Body of pancreas (tissue), 4 donors: ENCODE measurements at regions of chr12 and their contacts with region 1.

Region 1: DNA sequence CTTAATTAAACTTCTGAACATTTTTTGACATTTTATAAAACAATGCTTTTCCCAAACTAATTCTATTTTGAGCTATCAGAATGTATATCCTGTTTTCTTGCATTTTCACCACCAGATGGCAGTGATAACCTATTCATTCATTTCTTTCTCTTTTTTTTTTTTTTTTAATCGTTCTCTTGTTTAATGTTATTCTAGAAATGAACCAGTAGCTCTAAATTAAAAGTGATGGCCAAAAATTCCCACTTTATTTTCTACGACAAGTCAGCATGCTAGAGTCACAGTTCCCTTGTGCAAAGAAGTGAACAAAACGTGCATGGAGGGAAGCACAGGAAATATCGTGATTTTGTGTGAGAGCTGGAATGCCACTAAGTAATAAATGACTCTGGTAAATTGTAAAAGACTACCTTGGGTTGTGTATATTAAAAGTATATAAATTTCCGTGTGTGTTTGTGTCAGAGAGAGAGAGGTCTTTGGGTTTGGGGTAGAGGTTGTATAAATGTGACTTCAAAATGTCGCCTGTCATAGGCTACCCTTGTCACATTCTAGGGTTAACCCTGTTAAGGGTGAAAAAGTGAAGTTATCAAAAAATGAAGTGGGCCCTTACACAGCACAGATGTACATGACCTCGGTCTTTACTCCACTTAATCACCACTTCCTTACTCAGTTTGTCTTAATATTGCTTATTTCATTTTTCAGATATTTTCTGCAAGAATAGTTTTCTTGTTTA is 40.4 kb upstream of the LDHB start:
- DNase-seq: peak in 1 of 4 donors; percentile 17
- ATAC-seq: peak; percentile 45
- H3K4me3 ChIP-seq: no peak overlapping the region
- H3K27ac ChIP-seq: no peak overlapping the region
- H3K4me1 ChIP-seq: no peaks in the 10 kb centered on the region
- H3K27me3 ChIP-seq: no peaks in the 10 kb centered on the region
- CTCF ChIP-seq: peak; percentile 18 to 96 (median 67)
- POLR2A ChIP-seq: no peak

Region 2: DNA sequence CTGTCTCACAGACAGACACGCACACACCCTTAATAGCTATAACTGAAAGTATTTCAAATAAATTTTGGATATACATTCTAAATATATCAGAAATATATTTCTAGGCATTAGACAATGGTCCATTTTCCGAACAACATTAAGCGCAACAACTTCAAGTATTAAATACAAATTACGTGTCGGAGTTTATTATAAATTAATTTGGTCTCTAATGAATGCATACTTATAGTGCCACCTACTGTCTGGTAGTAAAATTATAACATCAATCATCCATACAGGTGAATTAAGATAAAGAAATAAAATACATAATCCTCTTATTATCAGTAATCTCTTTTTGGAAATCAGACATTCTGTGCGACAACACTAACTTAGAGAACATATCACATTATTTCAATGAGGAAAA is 320.8 kb after region 1 on chr12:
- intact Hi-C with region 1: loop called (anchors 5 kb)
- DNase-seq: no peak
- ATAC-seq: peak; percentile 47
- H3K4me3 ChIP-seq: no peak overlapping the region
- H3K27ac ChIP-seq: no peak overlapping the region
- H3K4me1 ChIP-seq: no peaks in the 10 kb centered on the region
- H3K27me3 ChIP-seq: no peaks in the 10 kb centered on the region
- CTCF ChIP-seq: peak; percentile 26 to 72 (median 63)
- POLR2A ChIP-seq: no peak